ENCODE measurements at regions of chr5 and their contacts with region 1.

Region 1: GRCh38 chr5:74766849-74767578 is at the starts of genes GFM2 and NSA2:
- DNase-seq: peak; percentile 83 to 95 (median 93)
- ATAC-seq: peak; percentile 85
- H3K4me3 ChIP-seq: peak within 1 kb of the TSS; percentile 94 to 96
- H3K4me3 Mint-ChIP-seq: peak within 1 kb of the TSS; percentile 100
- H3K27ac ChIP-seq: peak within 1 kb of the TSS; percentile 70 to 84
- H3K27ac Mint-ChIP-seq: peak within 1 kb of the TSS; percentile 97
- H3K4me1 ChIP-seq: peaks cover 25% of the 10 kb centered on the region
- H3K4me1 Mint-ChIP-seq: peaks cover 39% of the 10 kb centered on the region
- H3K27me3 ChIP-seq: no peaks in the 10 kb centered on the region
- H3K27me3 Mint-ChIP-seq: no peaks in the 10 kb centered on the region
- CTCF ChIP-seq: no peak
- total RNA-seq, gene GFM2: 11.0 to 15.0 TPM
- total RNA-seq, gene NSA2: 142 TPM

Region 2: DNA sequence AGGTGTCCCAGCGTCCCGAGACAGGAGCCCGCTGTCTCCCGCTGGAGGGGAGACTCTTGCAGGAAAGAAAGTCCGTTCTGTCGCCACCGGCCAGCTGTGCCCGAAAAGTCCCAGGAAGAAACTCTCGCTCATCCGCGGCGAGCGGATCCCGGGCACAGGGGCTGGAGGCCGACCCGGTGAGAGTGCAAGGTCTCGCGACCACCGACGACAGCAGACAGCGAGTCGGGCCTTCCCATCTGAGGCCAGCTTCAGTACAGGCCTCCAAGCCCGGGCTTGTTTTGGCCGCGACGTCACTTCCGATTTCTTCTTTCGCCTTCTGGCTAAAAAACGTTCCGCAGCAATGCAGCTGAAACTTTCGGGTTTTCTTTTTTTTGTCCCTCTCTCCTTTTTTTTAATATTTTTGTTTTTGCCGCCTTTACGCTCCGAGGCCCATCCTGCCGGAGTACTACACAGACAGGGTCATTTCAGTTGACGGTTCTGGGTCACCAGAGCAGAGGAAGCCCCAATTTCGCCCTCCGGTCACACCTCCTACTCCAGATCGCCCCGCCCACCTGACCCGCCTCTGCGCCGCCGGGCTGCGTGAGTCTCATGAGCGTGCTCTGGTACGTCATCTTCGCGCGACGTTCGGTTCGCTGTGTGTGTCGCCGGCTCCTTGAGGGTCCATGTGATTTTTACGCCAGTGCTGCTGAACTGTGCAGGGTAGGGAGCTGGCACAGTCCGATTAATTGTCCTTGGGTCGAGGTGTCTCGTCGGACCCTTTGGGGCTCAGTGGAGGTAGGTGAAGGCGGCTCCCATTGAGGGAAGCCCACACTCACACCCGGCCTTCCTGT is 1201.7 kb before region 1 on chr5 and contains the starts of genes ANKRA2 and UTP15:
- CTCF ChIA-PET with region 1: no interaction called
- POLR2A ChIA-PET with region 1: no interaction called
- intact Hi-C with region 1: loop called in 1 of 2 experiments (anchors 5 kb)
- DNase-seq: peak; percentile 97 to 100 (median 99)
- ATAC-seq: peak; percentile 96
- H3K4me3 ChIP-seq: peak within 1 kb of the TSS; percentile 72 to 81
- H3K4me3 Mint-ChIP-seq: peak within 1 kb of the TSS; percentile 100
- H3K27ac ChIP-seq: peak within 1 kb of the TSS; percentile 94 to 95
- H3K27ac Mint-ChIP-seq: peak within 1 kb of the TSS; percentile 100
- H3K4me1 ChIP-seq: peaks cover 26% of the 10 kb centered on the region
- H3K4me1 Mint-ChIP-seq: peaks cover 58% of the 10 kb centered on the region
- H3K27me3 ChIP-seq: no peaks in the 10 kb centered on the region
- H3K27me3 Mint-ChIP-seq: no peaks in the 10 kb centered on the region
- CTCF ChIP-seq: no peak
- total RNA-seq, gene ANKRA2: 43.4 to 44.1 TPM
- total RNA-seq, gene UTP15: 60.9 to 69.1 TPM

Region 3: GRCh38 chr5:74865804-74866595 is 99.0 kb after region 1 on chr5 and contains the start of gene FAM169A:
- CTCF ChIA-PET with region 1: interaction called, 4 read pairs
- POLR2A ChIA-PET with region 1: interaction called, 6 read pairs
- intact Hi-C with region 1: loop called (anchors 5 kb)
- DNase-seq: peak; percentile 22 to 81 (median 56)
- ATAC-seq: peak; percentile 74
- H3K4me3 ChIP-seq: peak within 1 kb of the TSS; percentile 78 to 86
- H3K4me3 Mint-ChIP-seq: peak within 1 kb of the TSS; percentile 94
- H3K27ac ChIP-seq: peak within 1 kb of the TSS; percentile 58 to 71
- H3K27ac Mint-ChIP-seq: peak within 1 kb of the TSS; percentile 92
- H3K4me1 ChIP-seq: peaks cover 24% of the 10 kb centered on the region
- H3K4me1 Mint-ChIP-seq: peaks cover 40% of the 10 kb centered on the region
- H3K27me3 ChIP-seq: no peaks in the 10 kb centered on the region
- H3K27me3 Mint-ChIP-seq: no peaks in the 10 kb centered on the region
- CTCF ChIP-seq: no peak
- total RNA-seq, gene FAM169A: 21.0 to 21.6 TPM

Region 4: DNA sequence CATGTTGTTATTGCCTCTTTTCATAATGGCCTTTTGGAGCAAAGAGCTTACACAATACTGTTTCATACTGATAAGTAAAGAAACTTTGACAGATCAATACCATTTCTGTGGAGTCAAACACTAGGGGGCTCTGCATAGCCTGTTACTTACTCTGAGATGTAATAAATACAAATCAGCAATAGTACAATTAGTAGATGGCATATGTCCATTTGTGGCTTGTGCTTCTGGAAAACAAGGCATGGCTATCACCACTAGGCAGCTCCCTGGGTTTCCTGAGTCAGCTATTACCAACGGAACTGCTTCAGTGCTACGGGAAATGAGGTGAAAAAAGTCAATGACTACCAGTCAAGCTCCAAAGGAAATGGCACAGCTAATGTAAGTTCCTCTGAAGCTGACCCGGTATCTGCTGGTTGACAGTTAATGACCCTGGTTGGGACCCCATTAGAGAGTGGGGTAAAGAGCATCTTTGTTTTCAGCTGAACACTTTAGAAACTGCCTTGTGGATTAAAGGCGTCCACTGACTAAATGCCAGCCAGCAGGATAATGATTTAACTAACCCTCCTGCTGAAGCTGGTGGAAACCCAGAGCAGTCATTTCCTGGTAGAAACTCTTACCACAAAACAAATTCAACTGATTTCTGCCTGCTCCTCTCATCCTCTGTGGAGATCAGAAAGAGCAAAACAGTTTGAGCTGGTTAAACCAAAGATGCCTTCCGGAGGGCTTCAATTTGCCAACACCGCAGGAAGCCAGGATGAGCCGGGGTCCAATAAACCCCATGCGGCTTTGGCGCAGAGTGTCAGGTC is 168.1 kb after region 1 on chr5:
- CTCF ChIA-PET with region 1: interaction called, 3 read pairs
- POLR2A ChIA-PET with region 1: no interaction called
- intact Hi-C with region 1: loop called in 1 of 2 experiments (anchors 5 kb)
- DNase-seq: peak in 7 of 9 experiments; percentile 7 to 60 (median 21)
- ATAC-seq: peak; percentile 71
- H3K4me3 ChIP-seq: peak overlapping the region; percentile 5 to 7
- H3K4me3 Mint-ChIP-seq: peak overlapping the region; percentile 73
- H3K27ac ChIP-seq: peak overlapping the region in 1 of 2 experiments; percentile 44
- H3K27ac Mint-ChIP-seq: peak overlapping the region; percentile 83
- H3K4me1 ChIP-seq: peaks cover 19% of the 10 kb centered on the region
- H3K4me1 Mint-ChIP-seq: peaks cover 26% of the 10 kb centered on the region
- H3K27me3 ChIP-seq: peaks cover 0 to 2% of the 10 kb centered on the region in 2 experiments
- H3K27me3 Mint-ChIP-seq: no peaks in the 10 kb centered on the region
- CTCF ChIP-seq: no peak

Region 5: GRCh38 chr5:74953940-74954720 is 187.1 kb after region 1 on chr5:
- CTCF ChIA-PET with region 1: no interaction called
- POLR2A ChIA-PET with region 1: no interaction called
- intact Hi-C with region 1: no loop called
- DNase-seq: no peak
- ATAC-seq: no peak
- H3K4me3 ChIP-seq: no peak overlapping the region
- H3K4me3 Mint-ChIP-seq: no peak overlapping the region
- H3K27ac ChIP-seq: no peak overlapping the region
- H3K27ac Mint-ChIP-seq: no peak overlapping the region
- H3K4me1 ChIP-seq: no peaks in the 10 kb centered on the region
- H3K4me1 Mint-ChIP-seq: peaks cover 4% of the 10 kb centered on the region
- H3K27me3 ChIP-seq: no peaks in the 10 kb centered on the region
- H3K27me3 Mint-ChIP-seq: no peaks in the 10 kb centered on the region
- CTCF ChIP-seq: no peak

Region 6: DNA sequence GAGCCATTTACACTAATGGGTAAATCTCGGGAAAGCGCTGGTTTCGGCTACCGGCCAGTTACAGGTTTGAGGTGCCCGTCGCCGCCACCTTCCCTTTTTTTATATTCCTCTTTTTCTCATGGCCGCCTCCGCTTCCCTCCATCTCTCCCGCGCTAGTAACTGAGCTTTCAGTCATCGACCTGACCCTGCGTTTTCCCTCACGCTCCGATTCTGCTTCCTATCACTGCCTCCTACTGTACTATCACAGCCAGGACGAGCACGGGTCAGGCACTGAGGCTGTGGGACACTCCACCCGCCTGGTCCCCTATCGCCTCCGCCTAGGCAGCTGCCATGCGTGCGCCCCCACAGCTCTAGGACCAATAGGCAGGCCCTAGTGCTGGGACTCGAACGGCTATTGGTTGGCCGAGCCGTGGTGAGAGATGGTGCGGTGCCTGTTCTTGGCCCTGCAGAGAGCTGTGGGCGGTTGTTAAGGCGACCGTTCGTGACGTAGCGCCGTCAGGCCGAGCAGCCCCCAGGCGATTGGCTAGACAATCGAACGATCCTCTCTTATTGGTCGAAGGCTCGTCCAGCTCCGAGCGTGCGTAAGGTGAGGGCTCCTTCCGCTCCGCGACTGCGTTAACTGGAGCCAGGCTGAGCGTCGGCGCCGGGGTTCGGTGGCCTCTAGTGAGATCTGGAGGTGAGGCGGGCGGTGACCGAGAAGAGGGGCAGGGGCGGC is 569.8 kb after region 1 on chr5 and contains the start of gene HMGCR:
- CTCF ChIA-PET with region 1: no interaction called
- POLR2A ChIA-PET with region 1: interaction called, 9 read pairs
- intact Hi-C with region 1: loop called (anchors 1 to 2 kb)
- DNase-seq: peak; percentile 93 to 99 (median 97)
- ATAC-seq: peak; percentile 92
- H3K4me3 ChIP-seq: peak within 1 kb of the TSS; percentile 72 to 96
- H3K4me3 Mint-ChIP-seq: no peak within 1 kb of the TSS
- H3K27ac ChIP-seq: peak within 1 kb of the TSS; percentile 87 to 92
- H3K27ac Mint-ChIP-seq: no peak within 1 kb of the TSS
- H3K4me1 ChIP-seq: peaks cover 18% of the 10 kb centered on the region
- H3K4me1 Mint-ChIP-seq: peaks cover 35% of the 10 kb centered on the region
- H3K27me3 ChIP-seq: no peaks in the 10 kb centered on the region
- H3K27me3 Mint-ChIP-seq: no peaks in the 10 kb centered on the region
- CTCF ChIP-seq: no peak
- total RNA-seq, gene HMGCR: 72.8 to 73.3 TPM

Region 7: GRCh38 chr5:75717082-75717922 is 950.3 kb after region 1 on chr5 and contains the start of gene POC5:
- CTCF ChIA-PET with region 1: no interaction called
- POLR2A ChIA-PET with region 1: no interaction called
- intact Hi-C with region 1: loop called in 1 of 2 experiments (anchors 5 kb)
- DNase-seq: peak; percentile 96 to 99 (median 98)
- ATAC-seq: peak; percentile 95
- H3K4me3 ChIP-seq: peak within 1 kb of the TSS; percentile 82 to 93
- H3K4me3 Mint-ChIP-seq: peak within 1 kb of the TSS; percentile 100
- H3K27ac ChIP-seq: peak within 1 kb of the TSS; percentile 69 to 88
- H3K27ac Mint-ChIP-seq: peak within 1 kb of the TSS; percentile 98
- H3K4me1 ChIP-seq: peaks cover 11% of the 10 kb centered on the region
- H3K4me1 Mint-ChIP-seq: peaks cover 39% of the 10 kb centered on the region
- H3K27me3 ChIP-seq: no peaks in the 10 kb centered on the region
- H3K27me3 Mint-ChIP-seq: no peaks in the 10 kb centered on the region
- CTCF ChIP-seq: no peak
- total RNA-seq, gene POC5: 6.5 to 7.9 TPM